Natural killer cell (primary cell): ENCODE measurements at regions of chr15 and their contacts with region 1.

Region 1: GRCh38 chr15:23039917-23040281 is 530 bp upstream of the TUBGCP5 start:
- DNase-seq: no peak
- ATAC-seq: peak in 1 of 3 donors; percentile 1
- H3K4me3 ChIP-seq: peak overlapping the region; percentile 43
- H3K4me3 Mint-ChIP-seq: peak overlapping the region; percentile 91
- H3K27ac ChIP-seq: no peak overlapping the region
- H3K27ac Mint-ChIP-seq: peak overlapping the region; percentile 71 to 76
- H3K4me1 ChIP-seq: peaks cover 11% of the 10 kb centered on the region
- H3K4me1 Mint-ChIP-seq: peaks cover 11 to 20% of the 10 kb centered on the region in 2 donors
- H3K27me3 ChIP-seq: no peaks in the 10 kb centered on the region
- H3K27me3 Mint-ChIP-seq: no peaks in the 10 kb centered on the region
- CTCF ChIP-seq: no peak

Region 2: DNA sequence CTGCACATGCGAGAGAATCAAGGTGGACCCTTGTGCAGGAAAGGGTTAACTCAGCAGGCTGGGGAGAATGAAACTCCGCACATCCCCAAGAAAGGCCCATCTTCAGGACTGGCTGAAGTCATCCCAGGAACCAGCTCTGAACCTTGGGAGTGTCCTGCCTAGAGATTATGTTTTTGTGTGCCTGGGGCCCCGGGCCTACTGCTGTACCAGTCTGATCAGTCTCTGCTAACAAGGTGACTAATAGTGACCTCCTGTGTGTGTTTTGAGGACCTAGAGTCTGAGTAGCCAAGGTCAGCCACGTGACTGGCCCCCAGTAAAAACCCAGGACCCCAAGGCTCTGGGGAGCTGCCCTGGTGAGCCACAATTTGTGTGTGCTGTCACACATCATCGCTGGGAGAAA is 117.9 kb before region 1 on chr15:
- intact Hi-C with region 1: loop called (anchors 10 kb)
- DNase-seq: no peak
- ATAC-seq: no peak
- H3K4me3 ChIP-seq: no peak overlapping the region
- H3K4me3 Mint-ChIP-seq: no peak overlapping the region
- H3K27ac ChIP-seq: no peak overlapping the region
- H3K27ac Mint-ChIP-seq: no peak overlapping the region
- H3K4me1 ChIP-seq: no peaks in the 10 kb centered on the region
- H3K4me1 Mint-ChIP-seq: no peaks in the 10 kb centered on the region
- H3K27me3 ChIP-seq: no peaks in the 10 kb centered on the region
- H3K27me3 Mint-ChIP-seq: no peaks in the 10 kb centered on the region
- CTCF ChIP-seq: no peak